Testis (tissue), 5 donors: ENCODE measurements at regions of chr2 and their contacts with region 1.

Region 1: DNA sequence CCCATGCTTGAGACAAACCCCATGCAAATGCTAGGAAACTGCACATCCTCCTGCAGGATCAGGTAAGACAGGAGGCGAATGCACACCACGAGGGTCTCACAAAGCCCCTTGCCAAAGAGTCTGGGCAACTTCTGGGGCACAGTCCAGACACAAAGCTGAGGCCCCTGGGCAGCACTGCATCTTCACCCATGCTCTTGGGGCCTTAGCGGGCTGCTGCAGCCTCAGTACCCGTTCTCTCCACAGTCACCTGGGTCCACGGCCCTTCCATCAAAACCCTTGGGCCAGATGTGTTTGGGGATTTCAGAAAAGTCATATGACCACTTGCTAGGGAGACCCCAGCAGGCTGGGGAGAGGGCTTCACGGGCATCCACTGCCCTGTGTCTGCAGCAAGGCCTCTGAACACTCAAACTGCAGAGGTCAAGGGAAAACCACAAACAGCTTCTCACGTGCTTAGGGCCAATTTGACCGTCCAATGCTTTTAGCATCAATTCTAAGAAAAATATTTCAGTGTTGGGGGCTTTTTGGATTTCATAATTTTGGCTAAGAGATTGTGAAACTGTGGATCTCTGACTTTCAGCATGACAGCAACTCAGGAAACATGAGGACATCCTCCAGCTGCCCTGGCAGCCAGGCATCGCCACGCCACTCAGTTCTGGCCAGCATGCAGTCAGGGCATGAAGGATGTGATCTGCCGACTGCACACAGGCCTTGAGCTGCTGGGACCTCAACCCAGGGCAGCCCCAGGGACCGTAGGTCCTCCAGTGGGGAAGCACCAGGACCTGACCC is 20.0 kb downstream of the PASK start:
- DNase-seq: no peak
- H3K4me3 ChIP-seq: no peak overlapping the region
- H3K27ac ChIP-seq: no peak overlapping the region
- H3K4me1 ChIP-seq: peaks cover 10% of the 10 kb centered on the region
- H3K27me3 ChIP-seq: no peaks in the 10 kb centered on the region
- CTCF ChIP-seq: no peak
- POLR2A ChIP-seq: no peak

Region 2: GRCh38 chr2:241168366-241168765 is 39.1 kb after region 1 on chr2:
- intact Hi-C with region 1: loop called (anchors 2 kb)
- DNase-seq: no peak
- H3K4me3 ChIP-seq: no peak overlapping the region
- H3K27ac ChIP-seq: no peak overlapping the region
- H3K4me1 ChIP-seq: no peaks in the 10 kb centered on the region
- H3K27me3 ChIP-seq: no peaks in the 10 kb centered on the region
- CTCF ChIP-seq: no peak
- POLR2A ChIP-seq: no peak

Region 3: GRCh38 chr2:241324775-241325174 is 195.5 kb after region 1 on chr2:
- intact Hi-C with region 1: no loop called
- DNase-seq: no peak
- H3K4me3 ChIP-seq: no peak overlapping the region
- H3K27ac ChIP-seq: no peak overlapping the region
- H3K4me1 ChIP-seq: peaks cover 24% of the 10 kb centered on the region
- H3K27me3 ChIP-seq: no peaks in the 10 kb centered on the region
- CTCF ChIP-seq: no peak
- POLR2A ChIP-seq: no peak